ENCODE measurements at regions of chr2 and their contacts with region 1.

Region 1: GRCh38 chr2:147082850-147083522 is 761.8 kb upstream of the ACVR2A start:
- DNase-seq: peak; percentile 67
- ATAC-seq: no peak
- H3K4me3 Mint-ChIP-seq: no peak overlapping the region
- H3K27ac Mint-ChIP-seq: no peak overlapping the region
- H3K4me1 Mint-ChIP-seq: no peaks in the 10 kb centered on the region
- H3K27me3 Mint-ChIP-seq: no peaks in the 10 kb centered on the region

Region 2: DNA sequence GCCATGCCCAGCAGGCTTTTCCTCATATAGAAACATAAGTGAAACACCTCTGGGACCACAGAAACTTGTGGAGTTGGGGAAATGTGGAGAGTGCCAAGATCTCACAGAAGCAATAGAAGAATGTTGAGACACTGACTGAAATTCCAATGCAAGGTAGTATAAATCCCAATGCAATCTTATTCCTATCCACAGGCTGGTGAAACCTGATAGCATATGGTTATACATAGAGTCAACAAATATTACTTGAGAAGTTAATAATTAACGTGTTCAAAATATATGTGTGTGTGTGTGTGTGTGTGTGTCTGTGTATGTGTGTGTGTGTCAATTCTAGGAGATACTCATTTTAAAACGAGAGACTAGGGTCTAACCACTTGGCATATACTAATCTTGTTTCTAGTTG is 14.9 kb before region 1 on chr2:
- CTCF ChIA-PET with region 1: interaction called, 16 read pairs
- POLR2A ChIA-PET with region 1: no interaction called
- DNase-seq: no peak
- ATAC-seq: no peak
- H3K4me3 Mint-ChIP-seq: no peak overlapping the region
- H3K27ac Mint-ChIP-seq: no peak overlapping the region
- H3K4me1 Mint-ChIP-seq: no peaks in the 10 kb centered on the region
- H3K27me3 Mint-ChIP-seq: no peaks in the 10 kb centered on the region